Activated T-helper 1 cell treated with anti-CD3 and anti-CD28 coated beads, Interleukin-12 subunit alpha, Interleukin-12 subunit beta, Interleukin-2, Interleukin-4 antibody, amounts not matched to agents 30 ng/mL and 10 ng/mL and 1 ng/mL, durations not matched to agents 14 hours and 24 hours and 36 hours (primary cell): ENCODE measurements at regions of chr7 and their contacts with region 1.

Region 1: GRCh38 chr7:140175221-140176121 is 1.3 kb downstream of the KDM7A start:
- DNase-seq: peak; percentile 88
- H3K4me3 Mint-ChIP-seq: peak overlapping the region; percentile 83
- H3K27ac Mint-ChIP-seq: peak overlapping the region; percentile 69
- H3K4me1 Mint-ChIP-seq: peaks cover 56% of the 10 kb centered on the region
- H3K27me3 Mint-ChIP-seq: peaks cover 6% of the 10 kb centered on the region

Region 2: GRCh38 chr7:139359366-139360209 is 815.9 kb before region 1 on chr7 and contains the start of gene LUC7L2:
- intact Hi-C with region 1: loop called (anchors 5 kb)
- DNase-seq: peak; percentile 99
- H3K4me3 Mint-ChIP-seq: peak within 1 kb of the TSS; percentile 88
- H3K27ac Mint-ChIP-seq: peak within 1 kb of the TSS; percentile 97
- H3K4me1 Mint-ChIP-seq: peaks cover 29% of the 10 kb centered on the region
- H3K27me3 Mint-ChIP-seq: no peaks in the 10 kb centered on the region
- total RNA-seq, gene LUC7L2: 179 and 194 TPM in 2 replicates

Region 3: GRCh38 chr7:140126435-140127034 is 48.9 kb before region 1 on chr7:
- intact Hi-C with region 1: loop called (anchors 2 kb)
- DNase-seq: no peak
- H3K4me3 Mint-ChIP-seq: peak overlapping the region; percentile 53
- H3K27ac Mint-ChIP-seq: peak overlapping the region; percentile 90
- H3K4me1 Mint-ChIP-seq: peaks cover 38% of the 10 kb centered on the region
- H3K27me3 Mint-ChIP-seq: no peaks in the 10 kb centered on the region

Region 4: GRCh38 chr7:140192620-140193019 is 17.1 kb after region 1 on chr7:
- intact Hi-C with region 1: no loop called
- DNase-seq: no peak
- H3K4me3 Mint-ChIP-seq: no peak overlapping the region
- H3K27ac Mint-ChIP-seq: no peak overlapping the region
- H3K4me1 Mint-ChIP-seq: peaks cover 21% of the 10 kb centered on the region
- H3K27me3 Mint-ChIP-seq: peaks cover 8% of the 10 kb centered on the region

Region 5: DNA sequence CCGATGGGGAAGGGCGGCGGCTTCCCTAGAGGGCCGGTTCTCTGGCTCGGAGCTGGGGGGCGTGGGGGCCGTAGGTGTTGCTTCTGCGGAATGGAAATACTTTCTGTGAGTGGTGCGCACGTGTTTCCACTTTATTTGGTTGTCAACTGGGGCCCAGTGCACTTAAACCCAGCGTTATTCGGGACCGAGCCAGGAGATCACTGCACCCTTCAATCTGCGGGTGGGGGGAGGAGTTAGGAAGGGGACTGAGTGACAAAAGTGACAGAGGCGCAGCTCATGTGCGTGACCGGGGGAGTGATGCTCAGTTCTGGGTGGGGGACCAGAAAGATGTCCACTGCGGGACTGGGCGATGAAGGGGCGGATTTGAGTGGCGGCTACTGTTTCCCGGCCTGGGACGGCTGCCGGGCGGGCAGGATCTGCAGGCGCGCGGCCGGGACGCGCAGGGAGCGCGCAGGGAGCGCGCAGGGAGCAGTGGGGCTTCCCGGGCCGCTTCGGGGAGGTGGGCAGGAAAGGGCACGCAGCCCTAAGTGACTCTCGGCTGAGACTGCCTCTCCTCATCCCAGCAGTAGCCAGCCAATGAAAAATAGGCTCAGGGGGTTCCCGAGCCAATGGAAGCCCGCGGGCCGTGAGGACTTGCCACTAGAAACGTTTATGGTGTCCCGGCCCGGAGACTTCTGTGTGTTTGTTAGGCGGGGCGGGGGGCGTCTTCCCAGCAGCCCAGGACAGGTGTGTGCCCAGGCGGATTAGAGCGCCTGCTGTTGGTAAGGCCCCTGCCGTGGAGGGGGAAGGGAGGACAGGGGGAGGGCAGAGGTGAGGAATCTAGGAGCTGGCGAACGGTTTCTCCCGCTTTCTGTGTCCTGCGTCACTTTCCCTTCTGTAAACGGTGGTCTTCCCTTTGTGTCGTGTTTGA is 55.6 kb after region 1 on chr7:
- intact Hi-C with region 1: loop called (anchors 1 kb)
- DNase-seq: peak; percentile 45
- H3K4me3 Mint-ChIP-seq: peak overlapping the region; percentile 91
- H3K27ac Mint-ChIP-seq: peak overlapping the region; percentile 94
- H3K4me1 Mint-ChIP-seq: peaks cover 46% of the 10 kb centered on the region
- H3K27me3 Mint-ChIP-seq: no peaks in the 10 kb centered on the region

Region 6: GRCh38 chr7:140304191-140304799 is 128.8 kb after region 1 on chr7:
- intact Hi-C with region 1: loop called (anchors 1 kb)
- DNase-seq: peak; percentile 27
- H3K4me3 Mint-ChIP-seq: no peak overlapping the region
- H3K27ac Mint-ChIP-seq: peak overlapping the region; percentile 78
- H3K4me1 Mint-ChIP-seq: peaks cover 21% of the 10 kb centered on the region
- H3K27me3 Mint-ChIP-seq: no peaks in the 10 kb centered on the region

Region 7: DNA sequence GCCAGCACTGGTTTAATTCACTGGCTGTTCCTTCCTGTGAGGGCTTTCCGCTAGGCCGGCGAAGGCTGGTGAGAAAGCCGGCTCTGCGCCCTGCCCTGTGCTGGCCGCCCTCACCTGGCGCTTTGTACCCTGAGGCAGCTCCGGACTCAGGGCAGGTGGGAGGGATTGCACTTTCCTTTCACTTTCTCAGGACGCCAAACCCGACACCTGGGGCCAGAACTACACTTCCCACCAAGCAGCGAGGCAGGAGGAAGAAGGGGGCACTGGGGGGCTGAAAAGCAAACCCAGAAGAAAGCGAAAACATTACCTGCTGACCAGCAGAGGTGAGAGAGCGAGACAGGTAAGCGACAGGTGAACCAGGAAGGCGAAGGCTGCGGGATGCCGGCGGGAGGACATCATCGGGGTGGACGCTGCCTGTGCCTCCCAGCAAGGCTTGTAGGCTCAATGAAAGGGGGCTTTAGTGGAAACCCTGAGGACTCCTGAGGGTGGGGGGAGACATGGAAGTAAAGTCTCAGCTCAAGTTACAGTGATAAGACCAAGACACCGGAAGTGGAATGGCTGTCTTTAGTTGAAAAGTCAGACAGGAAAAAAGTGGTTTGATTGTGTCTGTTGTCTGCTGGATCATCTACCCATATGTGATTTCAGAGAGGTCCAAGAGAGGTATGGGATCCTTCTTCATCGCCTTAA is 228.6 kb after region 1 on chr7 and contains the start of gene RAB19:
- intact Hi-C with region 1: loop called (anchors 1 kb)
- DNase-seq: peak; percentile 26
- H3K4me3 Mint-ChIP-seq: peak within 1 kb of the TSS; percentile 95
- H3K27ac Mint-ChIP-seq: peak within 1 kb of the TSS; percentile 90
- H3K4me1 Mint-ChIP-seq: peaks cover 49% of the 10 kb centered on the region
- H3K27me3 Mint-ChIP-seq: no peaks in the 10 kb centered on the region
- total RNA-seq, gene RAB19: 23.9 and 27.0 TPM in 2 replicates